OCI-LY7 (cell line): ENCODE measurements at regions of chr19 and their contacts with region 1.

Region 1: GRCh38 chr19:56015756-56016155 is 29.2 kb downstream of the NLRP5 start:
- DNase-seq: peak; percentile 7
- H3K4me3 ChIP-seq: no peak overlapping the region
- H3K27ac ChIP-seq: no peak overlapping the region
- H3K4me1 ChIP-seq: no peaks in the 10 kb centered on the region
- CTCF ChIP-seq: no peak

Region 2: GRCh38 chr19:55705972-55706371 is 309.8 kb before region 1 on chr19:
- CTCF ChIA-PET with region 1: no interaction called
- POLR2A ChIA-PET with region 1: interaction called, 11 read pairs
- intact Hi-C with region 1: no loop called
- DNase-seq: no peak
- H3K4me3 ChIP-seq: no peak overlapping the region
- H3K27ac ChIP-seq: no peak overlapping the region
- H3K4me1 ChIP-seq: no peaks in the 10 kb centered on the region
- CTCF ChIP-seq: no peak

Region 3: GRCh38 chr19:55857149-55857548 is 158.6 kb before region 1 on chr19:
- CTCF ChIA-PET with region 1: no interaction called
- POLR2A ChIA-PET with region 1: no interaction called
- intact Hi-C with region 1: no loop called
- DNase-seq: peak; percentile 91
- H3K4me3 ChIP-seq: peak overlapping the region; percentile 68
- H3K27ac ChIP-seq: peak overlapping the region; percentile 88
- H3K4me1 ChIP-seq: peaks cover 97% of the 10 kb centered on the region
- CTCF ChIP-seq: no peak